ENCODE measurements at regions of chr7 and their contacts with region 1.

Region 1: DNA sequence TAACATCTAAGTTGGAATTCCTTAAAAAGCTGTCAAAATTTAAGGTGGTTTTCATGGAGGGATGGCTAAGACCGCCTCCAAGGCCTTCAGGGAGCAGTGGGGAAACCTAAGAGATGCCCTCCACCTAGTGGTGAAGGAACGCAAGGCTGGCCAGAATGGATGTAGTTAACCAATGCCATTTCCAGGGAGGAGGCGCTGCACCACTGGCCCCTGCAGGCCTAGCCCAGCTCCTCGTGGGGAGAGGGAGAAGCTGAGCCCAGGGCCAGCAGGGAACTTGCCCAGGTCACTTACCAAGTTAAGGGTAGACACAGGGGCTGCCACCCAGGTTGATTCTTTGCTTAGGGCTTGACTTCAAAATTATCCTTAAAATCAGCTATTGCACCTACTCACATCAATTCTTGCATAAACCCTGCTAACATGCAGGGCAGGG is 32.0 kb downstream of the FIGNL1 start:
- DNase-seq: peak; percentile 72
- ATAC-seq: peak; percentile 93

Region 2: DNA sequence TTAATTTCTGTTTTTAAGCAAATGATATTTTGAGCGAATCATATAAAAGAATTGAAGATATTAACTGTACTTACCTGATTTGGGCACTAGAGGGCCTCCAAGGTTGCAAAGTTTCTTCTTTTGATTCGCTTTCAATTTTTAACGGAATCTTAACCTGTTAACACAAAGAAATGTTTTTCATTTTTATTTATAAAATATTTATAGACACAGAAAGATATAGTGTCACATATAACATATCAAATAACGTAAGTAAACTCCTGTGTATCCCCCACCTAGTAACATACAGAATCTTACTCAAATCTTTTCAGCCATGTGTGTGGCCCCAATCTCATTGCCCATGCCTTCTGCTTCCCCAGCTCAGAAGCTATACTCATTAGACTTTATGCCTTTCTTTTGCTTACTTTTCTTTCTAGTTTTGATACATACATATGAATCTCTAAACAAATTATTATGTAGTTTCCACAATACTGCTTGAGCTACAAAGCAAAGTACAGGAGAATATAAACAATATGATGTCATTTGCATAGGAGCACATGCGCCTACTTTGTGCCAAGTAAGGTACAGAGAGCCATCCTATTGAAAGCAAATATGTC is 275.6 kb before region 1 on chr7:
- intact Hi-C with region 1: loop called (anchors 5 kb)
- DNase-seq: no peak
- ATAC-seq: no peak

Region 3: GRCh38 chr7:50206453-50207250 is 211.4 kb before region 1 on chr7:
- intact Hi-C with region 1: loop called (anchors 5 kb)
- DNase-seq: no peak
- ATAC-seq: peak; percentile 46

Measured in left ventricle myocardium superior (tissue), 1 donor.